HepG2 (cell line): ENCODE measurements at regions of chr5 and their contacts with region 1.

Region 1: DNA sequence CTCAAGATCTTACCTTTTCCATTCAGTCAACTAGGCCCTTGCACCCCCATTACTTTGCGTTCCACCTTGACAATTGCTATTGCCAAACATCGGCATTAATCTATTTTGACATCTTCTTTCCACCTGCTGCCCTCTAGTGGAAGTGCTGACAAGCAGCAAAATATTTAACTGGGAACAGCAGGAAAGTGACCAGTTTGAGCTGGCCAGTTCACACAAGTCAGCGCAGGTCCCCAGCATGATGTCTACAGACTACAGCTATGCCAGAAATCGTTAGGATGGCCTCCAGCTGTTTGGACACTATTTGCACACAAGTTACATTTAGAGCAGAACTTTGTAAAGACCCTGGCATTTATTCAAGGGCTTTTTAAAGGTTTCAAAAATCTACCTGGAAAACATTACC is 160.1 kb downstream of the GHR start:
- DNase-seq: peak; percentile 64
- ATAC-seq: peak; percentile 94
- H3K4me3 ChIP-seq: no peak overlapping the region
- H3K27ac ChIP-seq: no peak overlapping the region
- H3K4me1 ChIP-seq: no peaks in the 10 kb centered on the region
- H3K27me3 ChIP-seq: no peaks in the 10 kb centered on the region
- CTCF ChIP-seq: peak; percentile 89
- EP300 ChIP-seq: no peak
- POLR2A ChIP-seq: no peak
- RAD21 ChIP-seq: peak; percentile 69

Region 2: GRCh38 chr5:41869739-41870626 is 713.3 kb before region 1 on chr5 and contains the start of gene OXCT1:
- CTCF ChIA-PET with region 1: no interaction called
- POLR2A ChIA-PET with region 1: no interaction called
- in situ Hi-C with region 1: loop called (anchors 25 kb)
- intact Hi-C with region 1: no loop called
- DNase-seq: peak; percentile 10
- ATAC-seq: peak; percentile 85
- H3K4me3 ChIP-seq: peak within 1 kb of the TSS; percentile 22 to 68 (median 54); a peak in 5 of 6 replicates
- H3K27ac ChIP-seq: no peak within 1 kb of the TSS
- H3K4me1 ChIP-seq: peaks cover 8% of the 10 kb centered on the region; the same call in 1 of the 2 replicates
- H3K27me3 ChIP-seq: peaks cover 0 to 8% of the 10 kb centered on the region in 2 experiments; a peak in 2 of 5 replicates
- CTCF ChIP-seq: no peak
- EP300 ChIP-seq: no peak
- POLR2A ChIP-seq: no peak
- RAD21 ChIP-seq: no peak
- total RNA-seq, gene OXCT1: 3.7 and 4.7 TPM in 2 replicates

Region 3: DNA sequence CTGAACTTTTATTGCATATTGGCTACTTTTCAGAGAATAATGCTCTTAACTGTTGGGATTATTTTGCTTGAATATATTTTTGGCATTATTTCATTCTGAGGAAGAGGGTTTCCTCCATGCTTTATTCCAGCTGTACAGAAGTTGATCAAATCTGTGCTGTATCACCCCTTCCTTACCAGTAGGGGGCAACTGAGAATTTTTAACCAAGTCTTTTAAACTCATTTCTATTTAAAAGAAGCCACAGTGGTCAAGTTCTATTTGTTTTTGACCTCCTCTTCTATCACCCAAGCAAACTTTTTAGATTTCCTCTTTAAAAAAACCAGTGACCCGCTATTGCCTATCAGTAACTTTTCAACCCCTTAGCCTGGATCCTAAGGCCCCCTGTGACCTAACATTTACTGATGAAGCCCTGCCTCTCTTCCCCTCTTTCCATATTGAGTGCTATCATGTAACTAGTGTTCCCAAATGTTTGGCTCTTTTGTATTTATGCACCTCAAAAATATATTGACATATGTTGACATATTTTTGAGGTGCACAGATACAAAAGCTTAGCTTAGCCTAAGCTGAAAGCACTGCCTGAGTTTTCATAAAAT is 577.7 kb before region 1 on chr5:
- CTCF ChIA-PET with region 1: no interaction called
- POLR2A ChIA-PET with region 1: no interaction called
- in situ Hi-C with region 1: no loop called
- intact Hi-C with region 1: loop called (anchors 1 kb)
- DNase-seq: peak; percentile 6
- ATAC-seq: peak; percentile 57
- H3K4me3 ChIP-seq: no peak overlapping the region
- H3K27ac ChIP-seq: no peak overlapping the region
- H3K4me1 ChIP-seq: no peaks in the 10 kb centered on the region
- H3K27me3 ChIP-seq: no peaks in the 10 kb centered on the region
- CTCF ChIP-seq: peak; percentile 52
- EP300 ChIP-seq: no peak
- POLR2A ChIP-seq: no peak
- RAD21 ChIP-seq: no peak

Region 4: DNA sequence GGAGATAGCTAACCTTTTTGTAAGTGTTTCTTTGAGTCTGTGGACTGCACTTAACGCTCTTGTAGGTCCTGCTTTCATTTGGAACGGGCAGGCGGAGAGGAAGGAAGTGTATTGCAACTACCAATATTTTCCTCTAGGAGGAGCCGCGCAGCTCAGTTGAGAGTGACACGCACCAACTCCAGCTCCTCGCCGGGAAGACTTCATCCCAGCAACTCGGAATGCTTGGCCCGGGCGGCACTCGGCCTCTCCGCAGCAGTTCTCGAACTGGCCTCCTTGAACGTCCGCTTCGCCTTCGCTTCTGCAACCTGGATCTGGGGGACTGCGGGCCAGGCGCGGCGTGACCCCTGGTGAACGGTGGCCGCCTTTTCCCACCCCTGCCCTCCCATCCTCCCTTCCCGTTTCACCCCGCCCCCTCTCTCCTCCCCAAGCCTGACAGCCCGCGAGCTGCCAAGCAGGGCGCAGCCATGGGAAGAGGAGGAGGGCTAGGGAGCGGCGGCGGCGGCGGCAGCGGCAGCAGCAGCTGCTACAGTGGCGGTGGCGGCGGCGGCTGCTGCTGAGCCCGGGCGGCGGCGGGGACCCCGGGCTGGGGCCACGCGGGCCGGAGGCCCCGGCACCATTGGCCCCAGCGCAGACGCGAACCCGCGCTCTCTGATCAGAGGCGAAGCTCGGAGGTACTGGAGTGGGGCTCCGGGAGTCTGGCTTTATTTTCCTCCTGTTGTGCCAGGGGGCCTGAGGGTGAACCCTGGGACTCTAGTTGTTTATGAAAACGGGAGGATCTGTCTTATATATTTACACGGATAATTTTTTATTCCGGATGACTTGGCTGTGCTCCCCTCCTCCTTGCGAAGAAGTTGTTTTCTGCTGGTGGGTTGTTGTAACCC is 159.8 kb before region 1 on chr5 and contains the start of gene GHR:
- CTCF ChIA-PET with region 1: interaction called, 11 read pairs
- POLR2A ChIA-PET with region 1: no interaction called
- in situ Hi-C with region 1: no loop called
- intact Hi-C with region 1: loop called (anchors 1 kb)
- DNase-seq: peak; percentile 72
- ATAC-seq: peak; percentile 96
- H3K4me3 ChIP-seq: peak within 1 kb of the TSS; percentile 49 to 71 (median 52); a peak in 5 of 6 replicates
- H3K27ac ChIP-seq: no peak within 1 kb of the TSS
- H3K4me1 ChIP-seq: peaks cover 12% of the 10 kb centered on the region
- H3K27me3 ChIP-seq: peaks cover 0 to 24% of the 10 kb centered on the region in 2 experiments; a peak in 3 of 5 replicates
- CTCF ChIP-seq: peak; percentile 85
- EP300 ChIP-seq: no peak
- POLR2A ChIP-seq: no peak
- RAD21 ChIP-seq: peak; percentile 68
- total RNA-seq, gene GHR: not detected in 2 replicates

Region 5: DNA sequence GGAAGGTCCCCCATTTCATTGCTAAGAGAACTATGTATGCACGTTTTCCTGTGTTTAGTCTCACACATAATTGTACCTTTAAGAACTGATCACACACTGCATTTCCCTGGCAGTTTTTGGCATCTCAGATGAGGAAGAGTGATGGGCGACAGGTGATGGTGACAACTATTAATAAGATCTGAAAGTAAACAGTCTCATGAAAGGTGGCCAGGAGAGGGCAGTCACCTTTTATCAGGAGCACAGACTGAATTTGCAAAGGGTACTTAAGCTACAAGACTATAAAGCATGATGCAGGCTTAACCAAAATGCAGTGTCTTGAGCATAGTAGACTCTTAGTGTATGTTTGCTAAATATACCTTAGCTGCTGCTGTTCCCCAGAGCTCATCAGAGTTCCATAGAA is 68.6 kb before region 1 on chr5:
- CTCF ChIA-PET with region 1: no interaction called
- POLR2A ChIA-PET with region 1: no interaction called
- in situ Hi-C with region 1: no loop called
- intact Hi-C with region 1: loop called (anchors 1 kb)
- DNase-seq: peak; percentile 3
- ATAC-seq: peak; percentile 58
- H3K4me3 ChIP-seq: no peak overlapping the region
- H3K27ac ChIP-seq: no peak overlapping the region
- H3K4me1 ChIP-seq: peaks cover 32% of the 10 kb centered on the region
- H3K27me3 ChIP-seq: no peaks in the 10 kb centered on the region
- CTCF ChIP-seq: peak; percentile 41
- EP300 ChIP-seq: no peak
- POLR2A ChIP-seq: no peak
- RAD21 ChIP-seq: no peak

Region 6: GRCh38 chr5:42676362-42676761 is 93.0 kb after region 1 on chr5:
- CTCF ChIA-PET with region 1: no interaction called
- POLR2A ChIA-PET with region 1: no interaction called
- in situ Hi-C with region 1: no loop called
- intact Hi-C with region 1: no loop called
- DNase-seq: no peak
- ATAC-seq: no peak
- H3K4me3 ChIP-seq: no peak overlapping the region
- H3K27ac ChIP-seq: no peak overlapping the region
- H3K4me1 ChIP-seq: no peaks in the 10 kb centered on the region
- H3K27me3 ChIP-seq: no peaks in the 10 kb centered on the region
- CTCF ChIP-seq: no peak
- EP300 ChIP-seq: no peak
- POLR2A ChIP-seq: no peak
- RAD21 ChIP-seq: no peak